Ovary (tissue), 10 donors: ENCODE measurements at regions of chr9 and their contacts with region 1.

Region 1: DNA sequence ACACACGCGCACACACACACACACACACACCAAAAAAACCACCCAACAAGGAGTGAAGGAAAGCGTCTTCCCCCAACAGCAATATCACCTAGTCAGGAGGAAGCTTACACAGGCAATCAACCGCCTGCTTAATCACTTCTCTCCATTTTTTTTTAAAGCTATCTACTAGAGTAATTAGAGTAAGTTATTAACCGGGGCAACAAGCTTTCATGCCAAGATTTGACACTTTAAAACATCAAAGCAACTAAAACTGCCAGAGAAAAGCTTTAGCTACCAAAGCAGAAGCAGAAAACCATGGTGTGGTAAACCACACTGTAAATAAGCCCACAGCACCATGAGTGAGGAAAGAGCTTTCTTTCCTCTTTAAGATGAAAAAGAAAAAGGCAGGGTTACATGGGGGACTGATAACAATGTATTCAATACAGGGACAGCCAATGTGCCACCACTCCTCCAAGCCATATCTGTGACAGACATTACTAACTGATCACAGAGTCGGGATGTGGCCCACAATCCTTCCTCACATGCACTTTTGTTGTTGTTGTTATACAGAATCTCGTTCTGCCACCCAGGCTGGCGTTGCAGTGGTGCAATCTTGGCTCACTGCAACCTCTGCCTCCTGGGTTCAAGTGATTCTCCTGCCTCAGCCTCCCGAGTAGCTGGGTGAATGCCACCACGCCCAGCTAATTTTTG is 282.1 kb downstream of the CRB2 start:
- DNase-seq: peak in 1 of 5 donors; percentile 29
- H3K4me3 ChIP-seq: peak overlapping the region; percentile 21
- H3K27ac ChIP-seq: no peak overlapping the region
- H3K4me1 ChIP-seq: peaks cover 9% of the 10 kb centered on the region
- H3K27me3 ChIP-seq: no peaks in the 10 kb centered on the region
- CTCF ChIP-seq: no peak
- EP300 ChIP-seq: no peak
- POLR2A ChIP-seq: no peak

Region 2: DNA sequence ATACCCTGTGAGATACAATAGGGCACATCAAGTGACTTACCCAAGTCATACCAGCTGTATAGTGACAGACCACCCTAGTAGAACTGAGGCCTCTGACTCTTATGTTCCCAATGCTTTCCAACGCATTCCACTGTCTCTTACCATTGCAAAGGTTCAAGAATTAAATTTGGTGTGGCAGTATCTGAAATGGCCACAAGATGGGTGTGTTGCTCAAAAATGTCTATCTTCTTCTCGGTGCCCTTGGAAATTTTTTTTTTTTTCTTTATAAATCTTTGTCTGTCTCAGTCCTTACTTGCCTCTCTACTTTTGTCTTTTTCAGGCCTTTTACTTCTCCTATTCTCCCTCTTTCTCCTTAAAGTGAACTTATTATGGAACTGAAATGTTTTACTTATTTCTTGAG is 556.3 kb before region 1 on chr9:
- intact Hi-C with region 1: no loop called
- DNase-seq: no peak
- H3K4me3 ChIP-seq: no peak overlapping the region
- H3K27ac ChIP-seq: no peak overlapping the region
- H3K4me1 ChIP-seq: no peaks in the 10 kb centered on the region
- H3K27me3 ChIP-seq: no peaks in the 10 kb centered on the region
- CTCF ChIP-seq: peak in 1 of 3 donors; percentile 25
- EP300 ChIP-seq: no peak
- POLR2A ChIP-seq: no peak

Region 3: DNA sequence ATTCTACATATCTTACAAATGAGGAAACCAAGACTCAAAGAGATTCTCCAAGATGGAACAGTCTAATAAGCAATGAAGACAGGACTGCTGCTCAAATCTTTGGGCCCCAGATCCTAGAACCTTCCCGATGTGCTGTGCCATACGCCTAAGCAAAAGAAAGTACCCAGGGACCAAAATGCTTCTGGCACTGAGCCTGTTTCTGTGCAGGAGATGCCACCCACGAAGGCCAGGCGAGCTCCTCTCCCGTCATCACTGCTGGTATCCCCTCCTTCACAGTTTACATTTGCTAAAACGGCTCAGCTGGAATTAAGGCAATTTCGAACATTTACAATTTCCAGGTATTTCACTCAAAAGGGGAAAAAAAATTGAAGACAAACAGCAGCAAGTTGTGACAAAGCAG is 14.3 kb after region 1 on chr9:
- intact Hi-C with region 1: loop called in 1 of 4 experiments (anchors 2 kb)
- DNase-seq: no peak
- H3K4me3 ChIP-seq: no peak overlapping the region
- H3K27ac ChIP-seq: no peak overlapping the region
- H3K4me1 ChIP-seq: no peaks in the 10 kb centered on the region
- H3K27me3 ChIP-seq: no peaks in the 10 kb centered on the region
- CTCF ChIP-seq: no peak
- EP300 ChIP-seq: no peak
- POLR2A ChIP-seq: no peak